ENCODE measurements at regions of chr22 and their contacts with region 1.

Region 1: GRCh38 chr22:22753526-22754267 is 109.3 kb downstream of the GGTLC2 start:
- DNase-seq: peak; percentile 63 to 90 (median 83)
- ATAC-seq: peak; percentile 85
- H3K4me3 ChIP-seq: peak overlapping the region in 1 of 2 experiments; percentile 25
- H3K4me3 Mint-ChIP-seq: peak overlapping the region; percentile 60
- H3K27ac ChIP-seq: peak overlapping the region; percentile 44 to 69
- H3K27ac Mint-ChIP-seq: peak overlapping the region; percentile 94
- H3K4me1 ChIP-seq: peaks cover 44% of the 10 kb centered on the region
- H3K4me1 Mint-ChIP-seq: peaks cover 66% of the 10 kb centered on the region
- H3K27me3 ChIP-seq: no peaks in the 10 kb centered on the region
- H3K27me3 Mint-ChIP-seq: no peaks in the 10 kb centered on the region
- CTCF ChIP-seq: peak; percentile 70

Region 2: GRCh38 chr22:22720201-22720723 is 33.4 kb before region 1 on chr22:
- CTCF ChIA-PET with region 1: interaction called, 13 read pairs
- POLR2A ChIA-PET with region 1: interaction called, 3 read pairs
- intact Hi-C with region 1: loop called (anchors 1 to 2 kb)
- DNase-seq: peak in 6 of 9 experiments; percentile 33 to 83 (median 64)
- ATAC-seq: peak; percentile 68
- H3K4me3 ChIP-seq: no peak overlapping the region
- H3K4me3 Mint-ChIP-seq: no peak overlapping the region
- H3K27ac ChIP-seq: peak overlapping the region in 1 of 2 experiments; percentile 74
- H3K27ac Mint-ChIP-seq: peak overlapping the region; percentile 81
- H3K4me1 ChIP-seq: peaks cover 25% of the 10 kb centered on the region
- H3K4me1 Mint-ChIP-seq: peaks cover 30% of the 10 kb centered on the region
- H3K27me3 ChIP-seq: no peaks in the 10 kb centered on the region
- H3K27me3 Mint-ChIP-seq: no peaks in the 10 kb centered on the region
- CTCF ChIP-seq: peak; percentile 47

Region 3: GRCh38 chr22:22802339-22802970 is 48.8 kb after region 1 on chr22:
- CTCF ChIA-PET with region 1: interaction called, 108 read pairs
- POLR2A ChIA-PET with region 1: interaction called, 8 read pairs
- intact Hi-C with region 1: loop called in 1 of 2 experiments (anchors 2 kb)
- DNase-seq: peak in 8 of 9 experiments; percentile 37 to 77 (median 58)
- ATAC-seq: peak; percentile 86
- H3K4me3 ChIP-seq: no peak overlapping the region
- H3K4me3 Mint-ChIP-seq: no peak overlapping the region
- H3K27ac ChIP-seq: no peak overlapping the region
- H3K27ac Mint-ChIP-seq: peak overlapping the region; percentile 18
- H3K4me1 ChIP-seq: no peaks in the 10 kb centered on the region
- H3K4me1 Mint-ChIP-seq: peaks cover 48% of the 10 kb centered on the region
- H3K27me3 ChIP-seq: no peaks in the 10 kb centered on the region
- H3K27me3 Mint-ChIP-seq: no peaks in the 10 kb centered on the region
- CTCF ChIP-seq: peak; percentile 80

Region 4: DNA sequence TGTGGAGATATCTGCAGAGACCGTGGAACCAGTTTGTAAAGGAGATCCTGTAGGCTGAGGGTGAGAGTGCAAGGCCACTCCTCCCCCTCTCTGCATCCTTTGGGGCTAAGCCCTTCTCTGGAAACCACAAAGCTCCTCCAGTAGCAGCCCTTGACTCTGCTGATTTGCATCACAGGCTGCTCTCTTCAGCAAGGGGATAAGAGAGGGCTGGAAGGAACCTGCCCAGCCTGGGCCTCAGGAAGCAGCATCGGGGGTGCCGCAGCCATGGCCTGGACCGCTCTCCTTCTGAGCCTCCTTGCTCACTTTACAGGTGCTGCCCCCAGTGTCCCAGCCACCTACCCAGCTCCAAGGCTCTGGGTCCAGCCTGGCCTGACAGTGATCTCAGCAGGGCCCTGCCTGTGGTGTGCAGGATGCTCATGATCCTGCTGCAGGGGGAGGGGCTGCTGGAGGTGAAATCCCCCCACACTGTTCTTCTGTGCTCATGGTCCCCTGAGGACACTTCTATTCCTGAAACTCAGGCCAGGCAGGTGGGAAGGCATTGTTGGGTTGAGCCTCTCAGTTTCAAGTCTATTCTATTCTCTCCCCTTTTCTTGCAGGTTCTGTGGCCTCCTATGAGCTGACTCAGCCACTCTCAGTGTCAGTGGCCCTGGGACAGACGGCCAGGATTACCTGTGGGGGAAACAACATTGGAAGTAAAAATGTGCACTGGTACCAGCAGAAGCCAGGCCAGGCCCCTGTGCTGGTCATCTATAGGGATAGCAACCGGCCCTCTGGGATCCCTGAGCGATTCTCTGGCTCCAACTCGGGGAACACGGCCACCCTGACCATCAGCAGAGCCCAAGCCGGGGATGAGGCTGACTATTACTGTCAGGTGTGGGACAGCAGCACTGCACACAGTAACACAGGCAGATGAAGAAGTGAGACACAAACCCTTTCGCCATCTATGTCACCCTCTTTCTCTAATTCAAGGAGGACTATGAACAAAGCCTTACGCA is 65.5 kb after region 1 on chr22:
- CTCF ChIA-PET with region 1: interaction called, 108 read pairs
- POLR2A ChIA-PET with region 1: interaction called, 27 read pairs
- intact Hi-C with region 1: no loop called
- DNase-seq: peak in 8 of 9 experiments; percentile 23 to 83 (median 56)
- ATAC-seq: peak; percentile 42
- H3K4me3 ChIP-seq: peak overlapping the region; percentile 50 to 51
- H3K4me3 Mint-ChIP-seq: peak overlapping the region; percentile 75
- H3K27ac ChIP-seq: peak overlapping the region; percentile 48 to 80
- H3K27ac Mint-ChIP-seq: peak overlapping the region; percentile 93
- H3K4me1 ChIP-seq: peaks cover 94% of the 10 kb centered on the region
- H3K4me1 Mint-ChIP-seq: peaks cover 98% of the 10 kb centered on the region
- H3K27me3 ChIP-seq: no peaks in the 10 kb centered on the region
- H3K27me3 Mint-ChIP-seq: no peaks in the 10 kb centered on the region
- CTCF ChIP-seq: no peak

Region 5: DNA sequence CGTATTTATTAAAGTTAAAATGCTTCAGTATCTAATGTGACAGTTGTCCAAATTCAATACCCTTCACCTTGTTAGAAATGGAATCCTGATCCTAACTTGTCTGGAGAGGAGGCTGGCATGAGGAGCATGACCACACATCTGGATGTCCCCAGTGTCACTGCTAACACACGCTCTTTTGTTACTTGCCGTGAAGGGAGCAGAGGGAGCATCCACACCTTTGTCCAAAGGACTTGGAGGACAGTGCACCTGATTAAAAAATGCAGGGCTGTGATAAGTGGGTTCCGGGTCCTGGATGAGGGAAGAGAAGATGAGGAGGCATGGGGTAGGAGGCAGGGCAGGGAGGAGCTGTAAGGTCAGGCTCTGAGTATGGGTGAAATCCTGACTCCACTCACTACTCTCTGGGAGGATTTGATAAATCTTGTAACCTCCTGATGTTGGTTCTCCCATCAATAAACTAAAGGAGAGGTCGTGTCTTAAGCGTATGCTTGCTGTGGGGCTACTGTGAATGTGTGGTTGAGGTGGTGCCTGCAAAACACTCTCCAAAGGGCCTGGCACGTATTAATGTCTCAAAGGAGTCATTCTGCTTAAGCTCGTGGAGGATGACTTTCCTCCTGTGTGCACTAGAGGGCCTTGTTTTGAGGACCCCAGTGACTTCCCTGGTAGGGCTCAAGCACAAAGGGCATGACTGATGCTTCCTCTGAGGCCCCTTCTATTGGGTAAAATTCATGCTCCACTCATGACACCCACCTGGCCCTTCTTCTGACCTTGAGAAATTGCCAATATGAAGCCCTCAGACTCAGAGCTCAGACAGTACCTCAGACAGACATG is 117.1 kb after region 1 on chr22:
- CTCF ChIA-PET with region 1: interaction called, 57 read pairs
- POLR2A ChIA-PET with region 1: no interaction called
- intact Hi-C with region 1: no loop called
- DNase-seq: peak in 3 of 9 experiments; percentile 29 to 47 (median 46)
- ATAC-seq: no peak
- H3K4me3 ChIP-seq: no peak overlapping the region
- H3K4me3 Mint-ChIP-seq: no peak overlapping the region
- H3K27ac ChIP-seq: no peak overlapping the region
- H3K27ac Mint-ChIP-seq: no peak overlapping the region
- H3K4me1 ChIP-seq: peaks cover 10% of the 10 kb centered on the region
- H3K4me1 Mint-ChIP-seq: peaks cover 26% of the 10 kb centered on the region
- H3K27me3 ChIP-seq: no peaks in the 10 kb centered on the region
- H3K27me3 Mint-ChIP-seq: no peaks in the 10 kb centered on the region
- CTCF ChIP-seq: no peak